ENCODE measurements at regions of chr10 and their contacts with region 1.

Region 1: DNA sequence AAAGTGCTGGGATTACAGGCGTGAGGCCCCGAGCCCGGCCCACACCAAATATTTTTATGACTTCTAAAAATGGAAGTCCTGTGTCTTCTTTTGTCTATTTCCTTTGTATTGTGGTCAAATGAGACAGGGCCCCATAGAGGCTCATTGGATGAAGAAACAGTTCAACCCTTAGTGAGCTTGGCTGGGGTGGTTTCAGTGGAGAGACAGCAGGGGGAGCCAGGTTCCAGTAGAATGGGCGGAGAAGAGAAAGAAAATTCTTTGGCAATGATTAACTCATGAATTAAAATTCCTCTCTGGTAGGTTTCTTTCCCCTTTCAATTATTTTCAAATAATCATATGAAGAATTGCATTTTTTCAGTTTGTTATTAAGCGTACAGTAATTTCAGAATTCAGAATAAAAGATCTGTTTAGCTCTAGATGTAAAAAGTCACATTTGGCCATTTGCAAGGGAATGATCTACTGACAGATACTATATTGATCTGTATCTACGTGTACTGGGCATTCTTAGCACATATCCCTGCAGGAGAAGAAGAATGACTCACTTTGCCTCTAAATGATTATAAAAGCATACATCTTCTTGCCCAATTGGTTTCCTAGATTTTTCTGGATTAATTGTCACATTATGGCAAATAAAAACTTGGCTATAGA is 43.2 kb downstream of the PNLIPRP3 start:
- DNase-seq: peak; percentile 56
- H3K4me3 ChIP-seq: no peak overlapping the region
- H3K27ac ChIP-seq: no peak overlapping the region
- H3K4me1 ChIP-seq: no peaks in the 10 kb centered on the region
- H3K27me3 ChIP-seq: no peaks in the 10 kb centered on the region
- CTCF ChIP-seq: peak; percentile 66

Region 2: DNA sequence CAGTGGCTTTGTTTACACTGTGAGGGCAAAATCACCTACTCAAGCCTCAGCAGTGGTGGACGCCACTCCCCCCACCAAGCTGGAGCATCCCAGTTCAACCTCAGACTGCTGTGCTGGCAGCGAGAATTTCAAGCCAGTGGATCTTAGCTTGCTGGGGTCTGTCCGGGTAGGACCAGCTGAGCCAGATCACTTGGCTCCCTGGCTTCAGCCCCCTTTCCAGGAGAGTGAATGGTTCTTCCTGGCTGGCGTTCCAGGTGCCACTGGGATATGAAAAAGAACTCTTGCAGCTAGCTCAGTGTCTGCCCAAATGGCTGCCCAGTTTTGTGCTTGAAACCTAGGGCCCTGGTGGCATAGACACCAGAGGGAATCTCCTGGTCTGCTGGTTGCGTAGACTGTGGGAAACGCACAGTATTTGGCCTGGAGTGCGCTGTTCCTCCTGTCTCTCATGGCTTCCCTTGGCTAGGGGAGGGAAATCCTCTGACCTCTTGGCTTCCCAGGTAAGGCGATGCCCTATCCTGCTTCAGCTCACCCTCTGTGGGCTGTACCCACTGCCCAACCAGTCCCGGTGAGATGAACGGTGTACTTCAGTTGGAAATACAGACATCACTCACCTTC is 979.3 kb before region 1 on chr10:
- CTCF ChIA-PET with region 1: no interaction called
- POLR2A ChIA-PET with region 1: no interaction called
- intact Hi-C with region 1: no loop called
- DNase-seq: no peak
- H3K4me3 ChIP-seq: no peak overlapping the region
- H3K27ac ChIP-seq: no peak overlapping the region
- H3K4me1 ChIP-seq: no peaks in the 10 kb centered on the region
- H3K27me3 ChIP-seq: peaks cover 9% of the 10 kb centered on the region
- CTCF ChIP-seq: no peak

Region 3: GRCh38 chr10:116521404-116522290 is 50.8 kb after region 1 on chr10:
- CTCF ChIA-PET with region 1: interaction called, 10 read pairs
- POLR2A ChIA-PET with region 1: no interaction called
- intact Hi-C with region 1: no loop called
- DNase-seq: peak; percentile 48
- H3K4me3 ChIP-seq: no peak overlapping the region
- H3K27ac ChIP-seq: no peak overlapping the region
- H3K4me1 ChIP-seq: no peaks in the 10 kb centered on the region
- H3K27me3 ChIP-seq: peaks cover 6% of the 10 kb centered on the region
- CTCF ChIP-seq: peak; percentile 83